ENCODE measurements at regions of chr12 and their contacts with region 1.

Region 1: DNA sequence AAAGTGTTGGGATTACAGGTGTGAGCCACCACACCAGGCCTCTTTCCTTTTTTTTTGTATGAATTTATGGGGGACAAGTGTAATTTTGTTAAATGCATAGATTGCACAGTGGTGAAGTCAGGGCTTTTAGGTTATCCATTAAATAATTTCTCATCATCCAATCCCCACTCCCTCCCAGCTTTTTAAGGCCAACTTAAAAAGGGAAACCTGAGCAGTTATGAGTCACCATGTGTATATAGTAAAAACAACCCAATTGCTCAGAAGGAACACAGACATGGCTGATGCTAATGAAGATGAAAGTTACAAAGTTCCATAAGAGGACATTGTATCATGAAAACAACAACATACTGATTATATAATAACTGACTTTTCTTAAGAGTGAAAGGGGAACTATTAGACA is 25.6 kb upstream of the ARID2 start:
- DNase-seq: no peak
- H3K4me3 Mint-ChIP-seq: no peak overlapping the region
- H3K27ac Mint-ChIP-seq: no peak overlapping the region
- H3K4me1 Mint-ChIP-seq: no peaks in the 10 kb centered on the region
- H3K27me3 Mint-ChIP-seq: peaks cover 6% of the 10 kb centered on the region

Region 2: GRCh38 chr12:45718306-45718705 is 14.4 kb after region 1 on chr12:
- intact Hi-C with region 1: loop called (anchors 2 kb)
- DNase-seq: no peak
- H3K4me3 Mint-ChIP-seq: no peak overlapping the region
- H3K27ac Mint-ChIP-seq: no peak overlapping the region
- H3K4me1 Mint-ChIP-seq: peaks cover 33% of the 10 kb centered on the region
- H3K27me3 Mint-ChIP-seq: no peaks in the 10 kb centered on the region

Region 3: DNA sequence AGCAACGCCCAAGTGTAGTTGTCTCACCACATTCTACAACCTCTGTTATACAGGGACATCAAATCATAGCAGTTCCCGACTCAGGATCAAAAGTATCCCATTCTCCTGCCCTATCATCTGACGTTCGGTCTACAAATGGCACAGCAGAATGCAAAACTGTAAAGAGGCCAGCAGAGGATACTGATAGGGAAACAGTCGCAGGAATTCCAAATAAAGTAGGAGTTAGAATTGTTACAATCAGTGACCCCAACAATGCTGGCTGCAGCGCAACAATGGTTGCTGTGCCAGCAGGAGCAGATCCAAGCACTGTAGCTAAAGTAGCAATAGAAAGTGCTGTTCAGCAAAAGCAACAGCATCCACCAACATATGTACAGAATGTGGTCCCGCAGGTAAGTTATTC is 148.6 kb after region 1 on chr12:
- intact Hi-C with region 1: no loop called
- DNase-seq: no peak
- H3K4me3 Mint-ChIP-seq: no peak overlapping the region
- H3K27ac Mint-ChIP-seq: no peak overlapping the region
- H3K4me1 Mint-ChIP-seq: no peaks in the 10 kb centered on the region
- H3K27me3 Mint-ChIP-seq: no peaks in the 10 kb centered on the region